K562 (cell line): ENCODE measurements at regions of chr3 and their contacts with region 1.

Region 1: DNA sequence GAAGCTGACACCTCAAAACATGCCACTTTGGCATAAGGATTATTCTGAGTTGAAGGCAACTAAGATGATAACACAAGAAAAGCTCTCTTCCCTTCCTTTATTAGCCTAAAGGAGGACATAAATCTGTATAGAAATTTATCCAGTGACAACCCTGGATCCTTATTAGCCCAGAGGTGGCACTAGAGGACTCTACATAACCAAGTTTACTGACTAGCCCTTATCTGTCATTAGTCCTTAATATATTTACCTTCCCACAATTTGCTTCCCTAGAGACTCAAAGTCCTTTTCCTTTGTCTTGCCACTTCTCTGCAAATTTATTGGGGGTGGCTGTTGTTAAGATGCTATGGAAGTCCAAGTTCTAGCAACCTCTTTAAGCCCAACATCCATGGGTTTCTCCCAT is 26.7 kb downstream of the CEP70 start:
- DNase-seq: no peak
- ATAC-seq: no peak
- H3K4me3 ChIP-seq: no peak overlapping the region
- H3K27ac ChIP-seq: no peak overlapping the region
- H3K4me1 ChIP-seq: no peaks in the 10 kb centered on the region
- H3K27me3 ChIP-seq: no peaks in the 10 kb centered on the region
- CTCF ChIP-seq: no peak
- EP300 ChIP-seq: no peak
- POLR2A ChIP-seq: no peak
- RAD21 ChIP-seq: 0 out of 4 replicates have a peak, but pooled peaks of 1 of the 2 experiments have one; percentile 10

Region 2: GRCh38 chr3:138296639-138297038 is 270.8 kb before region 1 on chr3:
- CTCF ChIA-PET with region 1: no interaction called
- POLR2A ChIA-PET with region 1: no interaction called
- in situ Hi-C with region 1: no loop called
- intact Hi-C with region 1: no loop called
- DNase-seq: no peak
- ATAC-seq: no peak
- H3K4me3 ChIP-seq: no peak overlapping the region
- H3K27ac ChIP-seq: no peak overlapping the region
- H3K4me1 ChIP-seq: no peaks in the 10 kb centered on the region
- H3K27me3 ChIP-seq: no peaks in the 10 kb centered on the region
- CTCF ChIP-seq: no peak
- EP300 ChIP-seq: no peak
- POLR2A ChIP-seq: no peak
- RAD21 ChIP-seq: no peak

Region 3: GRCh38 chr3:138615462-138615861 is 48.1 kb after region 1 on chr3:
- CTCF ChIA-PET with region 1: no interaction called
- POLR2A ChIA-PET with region 1: no interaction called
- in situ Hi-C with region 1: loop called (anchors 5 kb)
- intact Hi-C with region 1: no loop called
- DNase-seq: no peak
- ATAC-seq: no peak
- H3K4me3 ChIP-seq: no peak overlapping the region
- H3K27ac ChIP-seq: no peak overlapping the region
- H3K4me1 ChIP-seq: no peaks in the 10 kb centered on the region
- H3K27me3 ChIP-seq: no peaks in the 10 kb centered on the region
- CTCF ChIP-seq: no peak
- EP300 ChIP-seq: no peak
- POLR2A ChIP-seq: no peak
- RAD21 ChIP-seq: no peak